Caco-2 (cell line): ENCODE measurements at regions of chr16 and their contacts with region 1.

Region 1: DNA sequence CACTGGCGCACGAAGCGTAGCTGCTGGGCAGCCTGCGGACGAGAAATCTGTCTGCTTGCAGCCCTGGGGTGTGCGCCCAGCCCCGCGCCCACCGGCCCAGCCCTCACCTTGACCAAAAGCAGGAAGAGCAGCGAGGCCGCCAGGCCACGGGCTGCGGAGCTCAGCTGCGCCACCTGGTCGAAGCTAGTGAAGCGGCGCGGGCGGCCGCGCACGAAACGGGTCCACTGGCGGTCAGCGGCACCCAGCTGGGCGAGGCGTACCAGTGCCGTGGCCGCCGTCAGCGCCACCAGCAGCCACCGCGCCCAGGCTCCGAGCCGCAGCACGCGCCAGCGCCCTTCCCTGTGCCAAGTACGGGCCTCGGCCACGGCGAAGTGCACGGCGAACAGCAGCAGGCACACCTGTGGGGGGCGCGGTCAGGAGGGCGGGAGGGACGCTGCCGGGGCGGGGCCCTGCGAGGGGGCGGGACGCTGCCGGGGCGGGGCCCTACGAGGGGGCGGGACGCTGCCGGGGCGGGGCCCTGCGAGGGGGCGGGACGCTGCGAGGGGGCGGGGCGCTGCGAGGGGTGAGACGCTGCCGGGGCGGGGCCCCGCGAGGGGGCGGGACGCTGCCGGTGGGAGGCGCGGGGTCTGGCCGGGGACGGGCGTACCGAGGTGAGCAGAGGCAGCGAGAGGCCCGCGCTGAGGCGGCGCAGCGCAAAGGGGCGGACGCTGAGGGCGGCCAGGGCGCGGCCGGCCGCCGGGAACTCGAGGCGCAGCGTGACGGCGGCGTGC is 43.2 kb downstream of the TSC2 start:
- DNase-seq: peak; percentile 94 to 96
- H3K4me3 ChIP-seq: peak overlapping the region; percentile 63
- H3K4me3 Mint-ChIP-seq: peak overlapping the region; percentile 70
- H3K27ac Mint-ChIP-seq: peak overlapping the region; percentile 32
- H3K4me1 ChIP-seq: peaks cover 22% of the 10 kb centered on the region
- H3K4me1 Mint-ChIP-seq: no peaks in the 10 kb centered on the region
- H3K27me3 ChIP-seq: no peaks in the 10 kb centered on the region
- H3K27me3 Mint-ChIP-seq: no peaks in the 10 kb centered on the region
- CTCF ChIP-seq: peak; percentile 35 to 69

Region 2: DNA sequence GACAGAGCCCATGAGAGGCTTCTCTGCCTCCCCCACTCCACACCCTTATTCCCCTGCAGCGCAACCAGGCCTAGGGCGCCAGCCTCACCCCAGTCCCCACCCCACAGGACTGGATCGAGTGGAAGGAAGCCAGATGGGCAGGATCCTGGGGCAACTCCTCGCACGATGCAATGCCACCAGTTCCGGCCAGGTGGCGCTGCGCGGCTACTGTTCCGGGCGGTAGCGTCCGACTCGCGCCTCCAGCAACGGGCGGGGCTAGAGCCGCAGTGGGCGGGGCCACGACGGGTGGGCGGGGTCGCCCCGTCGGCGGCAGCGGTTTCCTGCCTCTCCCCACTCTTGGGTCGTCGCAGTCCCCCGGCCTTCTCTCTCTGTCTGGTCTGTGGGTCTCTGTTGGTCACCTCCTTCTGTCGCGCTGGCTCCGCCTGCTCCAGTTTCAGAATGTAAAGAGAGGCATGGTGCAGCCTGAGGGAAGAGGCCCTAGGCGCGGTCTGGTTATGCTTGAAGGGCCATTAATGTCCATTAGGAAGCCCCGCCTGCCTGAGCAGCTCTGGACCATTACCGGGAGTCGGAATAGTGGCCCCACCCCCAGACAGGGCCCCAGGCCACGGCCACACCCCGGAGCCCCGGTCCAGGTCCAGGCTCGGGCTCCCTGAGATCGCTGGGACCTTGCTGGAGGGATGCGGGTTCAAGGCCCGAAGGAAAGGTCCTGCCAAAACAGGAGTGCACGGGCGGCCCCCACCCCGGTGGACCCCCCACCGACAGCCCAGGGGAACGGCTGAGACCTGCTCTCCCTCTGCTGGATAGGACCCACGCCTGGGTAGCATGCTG is 67.7 kb before region 1 on chr16:
- CTCF ChIA-PET with region 1: interaction called, 12 read pairs
- POLR2A ChIA-PET with region 1: no interaction called
- intact Hi-C with region 1: loop called (anchors 1 kb)
- DNase-seq: peak; percentile 85 to 93
- H3K4me3 ChIP-seq: peak overlapping the region; percentile 25
- H3K4me3 Mint-ChIP-seq: peak overlapping the region; percentile 74
- H3K27ac Mint-ChIP-seq: no peak overlapping the region
- H3K4me1 ChIP-seq: peaks cover 17% of the 10 kb centered on the region
- H3K4me1 Mint-ChIP-seq: peaks cover 18% of the 10 kb centered on the region
- H3K27me3 ChIP-seq: no peaks in the 10 kb centered on the region
- H3K27me3 Mint-ChIP-seq: no peaks in the 10 kb centered on the region
- CTCF ChIP-seq: peak; percentile 90 to 95

Region 3: DNA sequence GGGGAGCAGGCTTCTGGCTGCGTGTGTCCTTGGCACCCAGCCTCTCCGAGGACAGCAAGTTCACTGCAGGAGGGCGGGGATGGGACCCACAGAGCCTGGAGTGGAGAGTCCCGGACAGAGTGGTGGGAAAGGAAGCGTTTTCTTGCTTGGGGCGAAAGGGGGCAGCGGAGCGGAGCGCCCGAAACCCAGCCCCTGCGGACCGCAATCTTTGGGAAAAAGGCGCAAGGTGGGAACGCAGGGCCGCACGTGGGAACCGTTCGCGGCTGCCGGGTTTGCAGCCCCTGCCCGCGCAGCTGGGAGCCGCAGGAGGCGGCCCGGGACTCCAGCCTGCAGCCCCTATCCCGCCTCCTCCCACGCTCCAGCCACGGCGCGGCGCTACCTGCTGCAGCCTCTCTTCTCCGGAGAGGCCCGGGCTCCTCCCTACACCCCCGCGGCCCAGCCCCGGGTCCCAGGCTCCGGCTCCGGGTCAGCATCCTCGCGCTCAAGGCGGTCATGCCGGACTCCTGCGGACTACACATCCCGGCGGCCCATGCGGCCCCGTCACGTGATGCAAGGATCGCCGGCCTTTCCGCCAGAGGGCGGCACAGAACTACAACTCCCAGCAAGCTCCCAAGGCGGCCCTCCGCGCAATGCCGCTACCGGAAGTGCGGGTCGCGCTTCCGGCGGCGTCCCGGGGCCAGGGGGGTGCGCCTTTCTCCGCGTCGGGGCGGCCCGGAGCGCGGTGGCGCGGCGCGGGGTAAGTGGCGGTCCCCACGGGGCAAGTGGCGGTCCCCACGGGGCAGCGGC is 43.4 kb before region 1 on chr16 and contains the starts of genes NTHL1 and TSC2:
- CTCF ChIA-PET with region 1: interaction called, 18 read pairs
- POLR2A ChIA-PET with region 1: no interaction called
- intact Hi-C with region 1: no loop called
- DNase-seq: peak; percentile 94 to 96
- H3K4me3 ChIP-seq: peak within 1 kb of the TSS; percentile 90
- H3K4me3 Mint-ChIP-seq: peak within 1 kb of the TSS; percentile 89
- H3K27ac Mint-ChIP-seq: peak within 1 kb of the TSS; percentile 23
- H3K4me1 ChIP-seq: no peaks in the 10 kb centered on the region
- H3K4me1 Mint-ChIP-seq: peaks cover 6% of the 10 kb centered on the region
- H3K27me3 ChIP-seq: no peaks in the 10 kb centered on the region
- H3K27me3 Mint-ChIP-seq: no peaks in the 10 kb centered on the region
- CTCF ChIP-seq: peak; percentile 39 to 56
- total RNA-seq, gene NTHL1: 34.3 and 38.6 TPM in 2 replicates
- total RNA-seq, gene TSC2: 109 and 112 TPM in 2 replicates

Region 4: DNA sequence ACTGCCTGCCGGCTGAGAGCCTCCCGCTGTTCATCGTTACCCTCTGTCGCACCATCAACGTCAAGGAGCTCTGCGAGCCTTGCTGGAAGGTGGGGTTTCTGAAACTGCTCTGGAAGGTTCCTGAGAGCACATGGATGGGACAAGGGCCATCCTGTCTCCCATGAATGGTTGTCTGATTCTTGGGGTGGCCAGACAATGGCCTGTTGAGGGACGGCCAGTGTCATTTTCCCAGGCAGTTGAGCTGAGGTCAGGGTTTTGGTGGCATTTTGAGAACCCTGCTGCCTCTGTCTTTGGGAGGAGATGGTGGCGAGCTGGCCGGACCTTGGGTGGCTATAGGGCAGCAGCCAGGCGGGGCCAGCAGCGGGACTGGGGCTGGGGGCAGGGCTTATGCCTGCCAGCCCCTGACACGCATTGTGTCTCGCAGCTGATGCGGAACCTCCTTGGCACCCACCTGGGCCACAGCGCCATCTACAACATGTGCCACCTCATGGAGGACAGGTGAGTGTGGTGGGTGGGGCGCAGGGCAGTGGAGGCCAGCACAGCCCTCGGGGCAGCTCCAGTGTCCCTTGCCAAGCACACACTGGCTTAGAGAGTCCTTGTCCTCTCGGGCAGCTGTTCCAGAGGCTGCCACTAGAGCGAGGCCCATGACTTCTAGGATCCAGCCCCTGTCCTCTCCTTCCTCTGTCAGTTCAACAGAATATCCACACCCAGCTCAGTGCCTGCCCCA is 34.1 kb before region 1 on chr16:
- CTCF ChIA-PET with region 1: interaction called, 5 read pairs
- POLR2A ChIA-PET with region 1: no interaction called
- intact Hi-C with region 1: loop called (anchors 2 kb)
- DNase-seq: peak in 1 of 2 experiments; percentile 33
- H3K4me3 ChIP-seq: no peak overlapping the region
- H3K4me3 Mint-ChIP-seq: no peak overlapping the region
- H3K27ac Mint-ChIP-seq: no peak overlapping the region
- H3K4me1 ChIP-seq: no peaks in the 10 kb centered on the region
- H3K4me1 Mint-ChIP-seq: no peaks in the 10 kb centered on the region
- H3K27me3 ChIP-seq: no peaks in the 10 kb centered on the region
- H3K27me3 Mint-ChIP-seq: no peaks in the 10 kb centered on the region
- CTCF ChIP-seq: peak; percentile 21 to 29

Region 5: GRCh38 chr16:2102471-2102870 is 11.5 kb after region 1 on chr16:
- CTCF ChIA-PET with region 1: no interaction called
- POLR2A ChIA-PET with region 1: no interaction called
- intact Hi-C with region 1: no loop called
- DNase-seq: no peak
- H3K4me3 ChIP-seq: no peak overlapping the region
- H3K4me3 Mint-ChIP-seq: no peak overlapping the region
- H3K27ac Mint-ChIP-seq: no peak overlapping the region
- H3K4me1 ChIP-seq: no peaks in the 10 kb centered on the region
- H3K4me1 Mint-ChIP-seq: no peaks in the 10 kb centered on the region
- H3K27me3 ChIP-seq: no peaks in the 10 kb centered on the region
- H3K27me3 Mint-ChIP-seq: no peaks in the 10 kb centered on the region
- CTCF ChIP-seq: no peak

Region 6: GRCh38 chr16:2180962-2181923 is 90.3 kb after region 1 on chr16:
- CTCF ChIA-PET with region 1: no interaction called
- POLR2A ChIA-PET with region 1: no interaction called
- intact Hi-C with region 1: no loop called
- DNase-seq: no peak
- H3K4me3 ChIP-seq: no peak overlapping the region
- H3K4me3 Mint-ChIP-seq: no peak overlapping the region
- H3K27ac Mint-ChIP-seq: peak overlapping the region; percentile 32
- H3K4me1 ChIP-seq: no peaks in the 10 kb centered on the region
- H3K4me1 Mint-ChIP-seq: peaks cover 6% of the 10 kb centered on the region
- H3K27me3 ChIP-seq: no peaks in the 10 kb centered on the region
- H3K27me3 Mint-ChIP-seq: no peaks in the 10 kb centered on the region
- CTCF ChIP-seq: no peak